ENCODE measurements at regions of chr12 and their contacts with region 1.

Region 1: GRCh38 chr12:79549497-79550271 is 141.1 kb downstream of the PAWR start:
- DNase-seq: no peak
- H3K4me3 ChIP-seq: no peak overlapping the region
- H3K27ac ChIP-seq: no peak overlapping the region
- H3K4me1 ChIP-seq: peaks cover 16 to 39% (median 33%) of the 10 kb centered on the region in 4 donors
- H3K27me3 ChIP-seq: no peaks in the 10 kb centered on the region
- CTCF ChIP-seq: no peak
- EP300 ChIP-seq: no peak
- POLR2A ChIP-seq: no peak

Region 2: DNA sequence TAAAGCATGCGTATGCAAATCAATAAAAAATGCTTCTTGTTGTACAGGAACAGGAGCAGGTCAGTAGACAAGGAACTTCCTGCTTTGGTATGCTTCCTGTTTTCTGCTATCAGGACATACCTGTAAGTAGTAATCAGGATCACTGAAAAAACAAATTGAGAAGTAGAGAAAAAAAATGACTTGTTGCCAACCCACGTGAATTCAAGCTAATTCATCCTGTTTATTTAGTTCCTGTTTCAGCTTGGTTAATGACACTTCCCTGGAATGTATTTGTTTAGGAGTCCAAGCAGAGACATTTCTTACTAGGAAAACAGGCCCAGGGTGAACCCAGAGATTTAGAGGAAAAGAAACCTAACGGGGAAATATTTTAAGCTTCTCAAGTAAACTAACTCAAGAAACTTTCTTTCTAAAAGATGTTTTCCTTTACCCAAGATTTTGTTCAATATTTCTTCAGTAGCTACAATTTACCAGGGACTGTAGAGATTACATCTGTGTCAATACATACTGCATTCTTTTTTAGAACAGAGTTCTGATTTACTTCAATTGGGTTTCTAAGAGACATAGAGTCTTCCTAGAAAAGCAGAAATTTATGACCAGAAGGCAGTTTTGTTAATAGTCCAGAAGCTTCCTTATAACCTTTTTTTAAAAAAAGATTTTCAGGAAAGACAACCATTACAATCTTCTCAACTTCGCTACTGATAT is 16.9 kb after region 1 on chr12:
- intact Hi-C with region 1: no loop called
- DNase-seq: no peak
- H3K4me3 ChIP-seq: no peak overlapping the region
- H3K27ac ChIP-seq: no peak overlapping the region
- H3K4me1 ChIP-seq: no peaks in the 10 kb centered on the region
- H3K27me3 ChIP-seq: no peaks in the 10 kb centered on the region
- CTCF ChIP-seq: no peak
- EP300 ChIP-seq: no peak
- POLR2A ChIP-seq: no peak

Region 3: GRCh38 chr12:79690638-79691493 is 141.2 kb after region 1 on chr12 and contains the start of gene PAWR:
- intact Hi-C with region 1: loop called (anchors 5 kb)
- DNase-seq: no peak
- H3K4me3 ChIP-seq: peak within 1 kb of the TSS; percentile 77 to 97 (median 85)
- H3K27ac ChIP-seq: peak within 1 kb of the TSS; percentile 85 to 94 (median 93)
- H3K4me1 ChIP-seq: peaks cover 0 to 42% (median 32%) of the 10 kb centered on the region in 4 donors
- H3K27me3 ChIP-seq: no peaks in the 10 kb centered on the region
- CTCF ChIP-seq: peak; percentile 24 to 32 (median 29)
- EP300 ChIP-seq: no peak
- POLR2A ChIP-seq: no peak
- total RNA-seq, gene PAWR: 63.1 to 127 (median 97.9) TPM

Measured in esophagus muscularis mucosa (tissue), 4 donors.